ENCODE measurements at regions of chr7 and their contacts with region 1.

Region 1: GRCh38 chr7:867672-868486 is 8.5 kb upstream of the GET4 start:
- DNase-seq: peak; percentile 68
- ATAC-seq: peak; percentile 76

Region 2: GRCh38 chr7:831596-832166 is 36.2 kb before region 1 on chr7:
- intact Hi-C with region 1: loop called (anchors 5 kb)
- DNase-seq: peak; percentile 2
- ATAC-seq: peak; percentile 81